Caco-2 (cell line): ENCODE measurements at regions of chr13 and their contacts with region 1.

Region 1: GRCh38 chr13:29508130-29508875 is 87.2 kb downstream of the SLC7A1 start:
- DNase-seq: peak; percentile 78 to 86
- H3K4me3 ChIP-seq: no peak overlapping the region
- H3K4me3 Mint-ChIP-seq: peak overlapping the region; percentile 32
- H3K27ac Mint-ChIP-seq: peak overlapping the region; percentile 87
- H3K4me1 ChIP-seq: peaks cover 14% of the 10 kb centered on the region
- H3K4me1 Mint-ChIP-seq: peaks cover 20% of the 10 kb centered on the region
- H3K27me3 ChIP-seq: no peaks in the 10 kb centered on the region
- H3K27me3 Mint-ChIP-seq: no peaks in the 10 kb centered on the region
- CTCF ChIP-seq: peak; percentile 90 to 98

Region 2: GRCh38 chr13:29496240-29496712 is 12.0 kb before region 1 on chr13:
- CTCF ChIA-PET with region 1: interaction called, 14 read pairs
- POLR2A ChIA-PET with region 1: no interaction called
- intact Hi-C with region 1: no loop called
- DNase-seq: no peak
- H3K4me3 ChIP-seq: no peak overlapping the region
- H3K4me3 Mint-ChIP-seq: no peak overlapping the region
- H3K27ac Mint-ChIP-seq: no peak overlapping the region
- H3K4me1 ChIP-seq: no peaks in the 10 kb centered on the region; the same call in 1 of the 2 replicates
- H3K4me1 Mint-ChIP-seq: no peaks in the 10 kb centered on the region
- H3K27me3 ChIP-seq: no peaks in the 10 kb centered on the region
- H3K27me3 Mint-ChIP-seq: peaks cover 6% of the 10 kb centered on the region
- CTCF ChIP-seq: no peak

Region 3: DNA sequence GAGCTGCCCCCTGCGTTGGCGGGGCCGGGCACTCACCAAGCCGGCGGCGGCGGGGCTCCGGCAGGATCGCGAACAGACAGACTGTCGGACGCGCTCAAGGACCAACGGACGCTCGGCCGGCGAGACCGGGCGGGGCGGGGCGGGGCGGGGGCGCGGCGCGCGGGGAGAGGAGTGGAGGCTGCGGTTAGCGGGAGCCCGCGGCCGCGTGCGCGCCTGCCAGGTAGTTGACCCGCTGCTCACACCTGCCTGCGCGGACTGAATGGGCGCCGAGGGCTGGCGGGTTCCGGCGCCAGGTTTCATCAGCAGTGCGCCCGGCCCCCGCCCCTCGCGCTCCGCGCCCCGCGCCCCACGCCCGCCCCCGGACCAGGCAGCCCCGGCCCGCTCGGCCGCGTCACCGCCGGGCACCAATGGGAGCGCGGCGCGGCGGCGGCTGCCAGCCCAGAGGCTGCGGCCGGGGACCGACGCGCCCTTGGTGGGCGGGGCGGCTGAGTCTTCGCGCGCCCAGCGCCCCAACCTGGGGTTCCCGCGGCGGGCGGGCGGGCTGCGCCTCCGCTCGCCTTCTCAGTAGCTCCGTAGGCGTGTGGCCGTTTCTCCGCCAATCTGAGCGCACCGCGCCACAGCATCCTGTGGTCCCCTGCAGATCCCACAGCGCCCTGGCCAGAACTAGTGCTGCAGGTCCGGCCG is 87.2 kb after region 1 on chr13 and contains the start of gene SLC7A1:
- CTCF ChIA-PET with region 1: interaction called, 3 read pairs
- POLR2A ChIA-PET with region 1: no interaction called
- intact Hi-C with region 1: loop called (anchors 5 kb)
- DNase-seq: peak; percentile 88 to 94
- H3K4me3 ChIP-seq: peak within 1 kb of the TSS; percentile 92
- H3K4me3 Mint-ChIP-seq: peak within 1 kb of the TSS; percentile 88
- H3K27ac Mint-ChIP-seq: peak within 1 kb of the TSS; percentile 91
- H3K4me1 ChIP-seq: peaks cover 11% of the 10 kb centered on the region
- H3K4me1 Mint-ChIP-seq: peaks cover 21% of the 10 kb centered on the region
- H3K27me3 ChIP-seq: 0 out of 2 replicates have a peak, but pooled peaks cover 1% of the 10 kb centered on the region
- H3K27me3 Mint-ChIP-seq: peaks cover 2% of the 10 kb centered on the region
- CTCF ChIP-seq: peak in 1 of 2 experiments; percentile 20
- total RNA-seq, gene SLC7A1: 164 and 180 TPM in 2 replicates

Region 4: GRCh38 chr13:29707876-29708543 is 199.7 kb after region 1 on chr13:
- CTCF ChIA-PET with region 1: interaction called, 7 read pairs
- POLR2A ChIA-PET with region 1: no interaction called
- intact Hi-C with region 1: loop called (anchors 1 kb)
- DNase-seq: peak; percentile 69 to 76
- H3K4me3 ChIP-seq: no peak overlapping the region
- H3K4me3 Mint-ChIP-seq: no peak overlapping the region
- H3K27ac Mint-ChIP-seq: no peak overlapping the region
- H3K4me1 ChIP-seq: no peaks in the 10 kb centered on the region
- H3K4me1 Mint-ChIP-seq: no peaks in the 10 kb centered on the region
- H3K27me3 ChIP-seq: no peaks in the 10 kb centered on the region; the same call in 1 of the 2 replicates
- H3K27me3 Mint-ChIP-seq: peaks cover 12% of the 10 kb centered on the region
- CTCF ChIP-seq: peak; percentile 58 to 74